ENCODE measurements at regions of chr12 and their contacts with region 1.

Region 1: DNA sequence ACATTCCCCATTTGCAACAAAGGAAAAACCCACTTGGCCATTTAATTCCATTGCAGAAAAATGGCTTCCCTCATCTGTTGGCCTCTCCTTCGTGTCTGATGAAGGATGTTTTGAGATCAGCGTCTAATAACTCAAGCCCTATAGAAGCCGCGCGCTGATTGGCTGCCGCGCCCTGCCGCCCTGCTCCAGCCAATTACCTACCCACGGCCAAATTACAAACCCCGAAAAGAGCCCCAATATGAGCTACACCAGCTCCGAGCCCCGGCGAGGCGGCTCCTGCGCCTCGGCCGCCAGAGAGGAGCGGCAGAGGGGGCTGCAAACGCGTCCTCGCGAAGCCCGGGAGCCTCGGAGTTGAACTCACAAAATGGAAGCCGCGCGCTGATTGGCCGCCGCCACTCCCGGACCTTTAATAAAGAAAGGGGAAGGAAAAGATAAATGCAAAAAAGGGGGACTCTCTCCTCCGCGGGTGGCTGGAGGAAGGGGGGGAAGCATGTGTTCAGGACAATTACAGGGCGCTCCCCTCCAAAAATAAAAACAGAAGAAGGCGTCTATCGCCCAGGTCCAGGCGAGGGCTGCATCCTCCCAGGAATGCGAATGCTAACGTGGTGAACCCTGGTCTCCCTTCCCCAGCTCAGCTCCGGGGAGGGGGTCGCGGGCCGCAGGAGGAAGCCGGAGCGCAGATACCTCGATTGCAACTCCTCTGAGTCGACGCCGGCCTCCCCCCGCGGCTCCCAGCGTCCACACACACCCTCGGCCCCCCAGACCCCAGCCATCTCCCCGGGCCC is 771 bp upstream of the SETD1B start:
- DNase-seq: peak; percentile 96
- ATAC-seq: peak; percentile 50
- H3K4me3 ChIP-seq: peak overlapping the region; percentile 82
- H3K27ac ChIP-seq: peak overlapping the region; percentile 97
- H3K4me1 ChIP-seq: peaks cover 23% of the 10 kb centered on the region
- H3K27me3 ChIP-seq: no peaks in the 10 kb centered on the region
- CTCF ChIP-seq: 0 out of 2 replicates have a peak, but pooled peaks have one; percentile 13
- POLR2A ChIP-seq: peak; percentile 95
- RAD21 ChIP-seq: no peak

Region 2: DNA sequence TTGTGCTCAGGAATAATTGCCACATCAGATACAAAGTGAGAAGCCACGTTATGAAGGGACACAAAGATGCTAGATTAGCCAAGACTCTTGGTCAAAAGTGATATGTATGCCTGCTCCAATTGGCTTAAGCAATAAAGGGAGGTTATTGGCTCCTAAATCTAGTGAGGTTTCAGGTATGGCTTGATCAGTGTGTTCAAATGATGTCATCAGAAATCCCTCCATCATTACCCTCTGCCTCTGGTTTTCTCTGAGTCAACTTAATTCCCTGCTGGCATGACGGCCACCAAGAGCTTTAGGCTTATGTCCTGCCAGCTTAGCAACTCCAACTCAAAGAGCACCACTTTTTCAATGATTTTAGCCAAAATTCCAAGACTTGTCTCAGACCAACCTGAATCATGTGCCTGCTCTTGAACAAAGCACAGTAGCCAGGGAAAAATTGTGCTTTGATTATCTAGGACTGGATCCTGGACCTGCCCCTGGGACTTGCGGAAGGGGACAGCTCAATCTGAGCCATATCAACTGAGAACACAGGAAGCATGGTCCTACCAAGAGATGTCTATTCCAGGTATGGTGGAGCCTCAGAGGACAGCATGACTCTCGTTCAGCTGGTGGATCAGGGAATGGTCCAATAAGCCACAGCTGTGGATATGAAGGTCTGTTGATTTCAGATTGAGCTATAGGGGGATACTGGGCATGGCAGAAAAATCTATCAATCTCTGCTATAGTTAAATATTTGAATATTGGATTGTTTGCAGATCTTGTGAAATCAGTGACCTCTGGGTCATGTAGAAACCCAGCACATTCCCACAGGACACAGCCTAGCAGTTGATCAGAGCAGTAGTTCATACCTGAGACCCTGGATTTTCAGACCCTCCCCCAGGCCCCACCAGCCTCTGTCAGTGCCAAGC is 686.5 kb before region 1 on chr12:
- CTCF ChIA-PET with region 1: no interaction called
- POLR2A ChIA-PET with region 1: interaction called, 11 read pairs
- dilution Hi-C with region 1: no loop called
- in situ Hi-C with region 1: no loop called
- intact Hi-C with region 1: no loop called
- DNase-seq: no peak
- ATAC-seq: no peak
- H3K4me3 ChIP-seq: no peak overlapping the region
- H3K27ac ChIP-seq: no peak overlapping the region
- H3K4me1 ChIP-seq: no peaks in the 10 kb centered on the region
- H3K27me3 ChIP-seq: peaks cover 22% of the 10 kb centered on the region
- CTCF ChIP-seq: no peak
- POLR2A ChIP-seq: no peak
- RAD21 ChIP-seq: no peak

Region 3: DNA sequence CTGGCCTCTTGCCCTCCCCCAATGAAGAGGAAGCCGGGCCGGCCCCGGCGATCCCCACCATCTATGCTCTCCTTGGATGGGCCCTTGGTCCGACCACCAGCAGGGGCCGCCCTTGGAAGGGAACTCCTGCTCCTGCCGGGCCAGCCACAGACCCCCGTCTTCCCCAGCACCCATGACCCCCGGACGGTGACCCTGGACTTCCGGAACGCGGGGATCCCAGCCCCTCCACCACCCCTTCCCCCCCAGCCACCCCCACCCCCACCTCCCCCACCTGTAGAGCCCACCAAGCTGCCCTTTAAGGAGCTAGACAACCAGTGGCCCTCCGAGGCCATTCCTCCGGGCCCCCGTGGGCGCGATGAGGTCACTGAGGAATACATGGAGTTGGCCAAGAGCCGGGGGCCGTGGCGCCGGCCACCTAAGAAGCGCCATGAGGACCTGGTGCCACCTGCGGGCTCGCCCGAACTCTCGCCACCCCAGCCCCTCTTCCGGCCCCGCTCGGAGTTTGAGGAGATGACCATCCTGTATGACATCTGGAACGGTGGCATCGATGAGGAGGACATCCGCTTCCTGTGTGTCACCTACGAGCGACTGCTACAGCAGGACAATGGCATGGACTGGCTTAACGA is 20.2 kb after region 1 on chr12:
- CTCF ChIA-PET with region 1: no interaction called
- POLR2A ChIA-PET with region 1: no interaction called
- dilution Hi-C with region 1: no loop called
- in situ Hi-C with region 1: no loop called
- intact Hi-C with region 1: no loop called
- DNase-seq: no peak
- ATAC-seq: no peak
- H3K4me3 ChIP-seq: no peak overlapping the region
- H3K27ac ChIP-seq: no peak overlapping the region
- H3K4me1 ChIP-seq: no peaks in the 10 kb centered on the region
- H3K27me3 ChIP-seq: no peaks in the 10 kb centered on the region
- CTCF ChIP-seq: no peak; the same call in 1 of the 2 replicates
- POLR2A ChIP-seq: no peak
- RAD21 ChIP-seq: no peak